HEK293 (cell line): ENCODE measurements at regions of chrX and their contacts with region 1.

Region 1: GRCh38 chrX:12955882-12956703 is 18.8 kb upstream of the TMSB4X start:
- H3K4me3 ChIP-seq: no peak overlapping the region
- H3K27ac ChIP-seq: peak overlapping the region; percentile 88
- H3K4me1 ChIP-seq: peaks cover 12% of the 10 kb centered on the region
- CTCF ChIP-seq: no peak

Region 2: GRCh38 chrX:12868747-12869146 is 87.3 kb before region 1 on chrX:
- CTCF ChIA-PET with region 1: no interaction called
- POLR2A ChIA-PET with region 1: no interaction called
- H3K4me3 ChIP-seq: no peak overlapping the region
- H3K27ac ChIP-seq: no peak overlapping the region
- H3K4me1 ChIP-seq: no peaks in the 10 kb centered on the region
- CTCF ChIP-seq: no peak

Region 3: DNA sequence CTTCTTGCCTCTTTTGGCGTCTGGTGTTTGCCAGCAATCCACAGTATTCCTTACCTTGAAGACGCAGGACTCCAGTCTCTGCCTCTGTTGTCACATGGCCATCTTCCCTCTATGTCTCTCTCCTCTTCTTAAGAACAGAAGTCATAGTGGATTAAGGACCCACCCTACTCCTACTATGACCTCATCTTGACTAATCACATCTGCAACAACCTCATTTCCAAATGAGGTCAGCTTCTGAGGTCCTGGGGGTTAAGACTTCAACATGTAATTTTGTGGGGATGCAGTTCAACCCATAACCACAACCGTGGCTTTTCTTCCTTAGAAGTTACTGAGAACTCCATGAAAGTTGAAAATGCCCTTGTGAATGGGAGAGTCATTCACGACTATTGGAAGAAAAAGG is 26.4 kb before region 1 on chrX:
- CTCF ChIA-PET with region 1: no interaction called
- POLR2A ChIA-PET with region 1: no interaction called
- H3K4me3 ChIP-seq: no peak overlapping the region
- H3K27ac ChIP-seq: no peak overlapping the region
- H3K4me1 ChIP-seq: no peaks in the 10 kb centered on the region
- CTCF ChIP-seq: no peak

Region 4: DNA sequence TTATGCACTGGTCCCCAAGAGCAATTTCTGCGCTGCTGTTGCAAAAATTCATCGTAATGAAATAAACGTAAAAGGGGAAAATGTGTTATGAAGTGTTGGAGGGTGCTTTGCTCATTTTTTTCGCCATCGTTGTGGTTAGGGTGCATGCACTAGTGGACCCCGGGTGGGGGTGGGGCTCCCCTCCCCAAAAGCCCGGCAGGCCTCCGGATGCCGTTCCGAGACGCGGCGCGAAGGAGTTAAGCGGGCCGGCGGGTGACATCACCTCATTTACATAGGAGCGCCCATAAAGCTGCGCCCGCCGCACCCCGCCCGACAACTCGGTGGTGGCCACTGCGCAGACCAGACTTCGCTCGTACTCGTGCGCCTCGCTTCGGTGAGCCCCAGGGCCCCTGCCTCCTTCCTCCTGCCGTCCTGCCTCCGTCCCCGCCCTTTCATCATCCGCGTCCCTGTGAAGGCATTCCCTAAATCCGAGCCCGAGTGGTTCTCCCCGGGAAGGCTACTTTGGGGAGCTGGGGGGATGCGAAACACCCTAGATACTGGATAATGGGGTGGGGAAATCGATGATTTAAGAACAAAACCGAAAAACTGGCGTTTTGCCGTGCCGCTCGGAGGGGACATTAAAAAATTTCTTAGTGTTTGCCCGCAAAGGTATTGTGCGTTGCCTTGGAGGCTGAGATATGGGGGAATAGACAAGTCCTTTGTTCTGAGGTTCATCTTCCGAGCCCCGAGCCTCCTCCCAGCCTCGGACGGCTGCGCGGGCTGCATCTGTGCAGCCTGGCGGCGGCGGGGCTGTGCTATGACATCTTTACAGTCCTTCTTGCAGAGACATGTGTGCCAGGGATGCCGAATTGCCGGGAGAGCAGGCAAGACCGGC is 18.9 kb after region 1 on chrX and contains the start of gene TMSB4X:
- CTCF ChIA-PET with region 1: interaction called, 14 read pairs
- POLR2A ChIA-PET with region 1: interaction called, 12 read pairs
- H3K4me3 ChIP-seq: peak within 1 kb of the TSS; percentile 62
- H3K27ac ChIP-seq: peak within 1 kb of the TSS; percentile 73
- H3K4me1 ChIP-seq: no peaks in the 10 kb centered on the region
- CTCF ChIP-seq: no peak